ENCODE measurements at regions of chr17 and their contacts with region 1.

Region 1: DNA sequence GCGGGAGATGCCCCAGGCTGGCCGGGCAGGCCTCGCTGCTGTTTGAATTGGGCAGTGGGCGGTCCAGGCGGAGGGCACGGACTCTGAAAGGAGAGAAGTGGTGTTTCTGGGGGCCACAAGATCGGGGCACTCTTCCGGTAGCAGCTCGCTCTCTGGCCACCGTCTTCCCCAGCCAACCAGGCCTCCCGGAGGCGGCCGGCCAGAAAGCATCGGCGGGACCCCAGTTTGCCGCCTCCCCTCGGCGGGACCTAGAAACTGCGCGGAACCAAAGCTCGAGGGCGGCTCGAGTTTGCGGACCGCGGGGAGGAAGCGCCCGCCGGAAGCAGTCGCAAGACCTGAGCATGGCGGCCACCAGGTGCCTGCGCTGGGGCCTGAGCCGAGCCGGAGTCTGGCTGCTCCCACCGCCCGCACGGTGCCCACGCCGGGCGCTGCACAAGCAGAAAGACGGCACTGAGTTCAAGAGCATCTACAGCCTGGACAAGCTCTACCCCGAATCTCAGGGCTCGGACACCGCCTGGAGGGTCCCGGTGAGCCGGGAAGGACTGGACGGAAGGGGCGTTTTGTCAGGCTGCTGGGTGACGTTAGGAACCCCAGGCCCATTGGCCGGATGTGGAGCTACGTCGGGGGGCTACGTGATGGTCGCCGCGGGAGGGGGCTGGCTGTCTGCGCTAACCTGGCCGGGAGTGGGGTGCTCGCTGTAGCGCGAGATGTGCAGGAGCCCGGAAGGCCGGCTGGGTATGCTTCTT is at the start of gene MRPL58:
- DNase-seq: peak; percentile 86
- H3K4me3 Mint-ChIP-seq: peak within 1 kb of the TSS; percentile 93
- H3K27ac Mint-ChIP-seq: peak within 1 kb of the TSS; percentile 84
- H3K4me1 Mint-ChIP-seq: peaks cover 30% of the 10 kb centered on the region
- H3K27me3 Mint-ChIP-seq: no peaks in the 10 kb centered on the region
- total RNA-seq, gene MRPL58: 45.4 to 49.6 TPM

Region 2: DNA sequence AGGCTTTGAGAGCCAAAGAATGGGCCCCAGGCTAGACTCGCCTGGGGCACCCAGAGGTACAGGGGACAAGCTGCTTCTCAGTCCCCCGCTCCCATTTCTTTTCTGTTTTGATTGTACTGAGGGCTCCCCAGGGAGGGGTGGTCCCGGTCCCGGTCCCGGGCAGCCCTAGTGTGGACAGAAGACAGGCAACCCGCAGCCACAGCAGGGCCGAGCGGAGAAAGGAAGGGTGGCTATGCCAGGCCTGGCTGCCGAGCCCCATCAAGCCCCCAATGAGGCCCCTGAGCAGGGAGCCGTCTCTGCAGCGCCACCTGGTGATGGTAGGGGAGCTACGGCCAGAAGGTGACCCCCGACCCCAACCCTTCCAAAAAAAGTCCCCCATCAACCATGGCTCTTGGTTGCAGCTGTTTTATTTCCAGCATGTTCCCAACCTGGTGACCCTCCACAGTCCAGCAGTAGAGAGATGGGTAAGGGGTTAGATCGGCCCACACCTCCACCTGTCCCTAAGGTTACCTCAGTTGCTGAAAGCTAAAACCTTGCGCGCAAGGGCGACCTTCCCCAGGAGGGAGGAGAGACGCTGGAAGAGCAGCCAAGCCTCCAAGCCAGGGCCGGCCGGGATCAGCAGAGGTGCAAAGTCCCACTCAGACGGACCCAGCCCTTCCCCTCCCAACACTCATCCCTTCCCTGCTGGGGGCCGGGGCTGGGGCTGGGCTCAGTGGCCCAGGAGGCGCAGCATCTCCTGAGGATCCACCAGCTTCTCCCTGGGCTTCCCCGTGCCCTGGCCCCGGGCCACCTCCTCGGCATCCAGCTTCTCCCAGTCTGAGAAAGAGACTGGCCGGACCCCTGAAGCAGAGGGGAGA is 150.2 kb before region 1 on chr17:
- CTCF ChIA-PET with region 1: no interaction called
- POLR2A ChIA-PET with region 1: no interaction called
- DNase-seq: peak; percentile 62
- H3K4me3 Mint-ChIP-seq: no peak overlapping the region
- H3K27ac Mint-ChIP-seq: no peak overlapping the region
- H3K4me1 Mint-ChIP-seq: peaks cover 19% of the 10 kb centered on the region
- H3K27me3 Mint-ChIP-seq: peaks cover 35% of the 10 kb centered on the region

Region 3: GRCh38 chr17:74972107-74972972 is 40.2 kb before region 1 on chr17 and contains the start of gene HID1:
- CTCF ChIA-PET with region 1: interaction called, 16 read pairs
- POLR2A ChIA-PET with region 1: interaction called, 16 read pairs
- DNase-seq: peak; percentile 76
- H3K4me3 Mint-ChIP-seq: peak within 1 kb of the TSS; percentile 72
- H3K27ac Mint-ChIP-seq: no peak within 1 kb of the TSS
- H3K4me1 Mint-ChIP-seq: peaks cover 6% of the 10 kb centered on the region
- H3K27me3 Mint-ChIP-seq: peaks cover 33% of the 10 kb centered on the region
- total RNA-seq, gene HID1: 0.38 to 1.4 TPM

Region 4: GRCh38 chr17:74998783-74999182 is 13.7 kb before region 1 on chr17:
- CTCF ChIA-PET with region 1: interaction called, 6 read pairs
- POLR2A ChIA-PET with region 1: interaction called, 15 read pairs
- DNase-seq: no peak
- H3K4me3 Mint-ChIP-seq: no peak overlapping the region
- H3K27ac Mint-ChIP-seq: no peak overlapping the region
- H3K4me1 Mint-ChIP-seq: peaks cover 7% of the 10 kb centered on the region
- H3K27me3 Mint-ChIP-seq: peaks cover 4% of the 10 kb centered on the region

Region 5: GRCh38 chr17:75034236-75034908 is 21.9 kb after region 1 on chr17:
- CTCF ChIA-PET with region 1: interaction called, 21 read pairs
- POLR2A ChIA-PET with region 1: interaction called, 39 read pairs
- DNase-seq: peak; percentile 88
- H3K4me3 Mint-ChIP-seq: peak overlapping the region; percentile 87
- H3K27ac Mint-ChIP-seq: peak overlapping the region; percentile 99
- H3K4me1 Mint-ChIP-seq: peaks cover 51% of the 10 kb centered on the region
- H3K27me3 Mint-ChIP-seq: peaks cover 8% of the 10 kb centered on the region

Region 6: GRCh38 chr17:75271233-75271954 is 258.9 kb after region 1 on chr17:
- CTCF ChIA-PET with region 1: no interaction called
- POLR2A ChIA-PET with region 1: interaction called, 14 read pairs
- DNase-seq: peak; percentile 92
- H3K4me3 Mint-ChIP-seq: peak overlapping the region; percentile 85
- H3K27ac Mint-ChIP-seq: peak overlapping the region; percentile 89
- H3K4me1 Mint-ChIP-seq: peaks cover 47% of the 10 kb centered on the region
- H3K27me3 Mint-ChIP-seq: no peaks in the 10 kb centered on the region

Measured in activated CD4-positive, alpha-beta memory T cell treated with anti-CD3 and anti-CD28 coated beads, Interleukin-2, amount 10 ng/mL, durations not matched to agents 7 days and 5 days (primary cell).